Colonic mucosa (tissue), 4 donors: ENCODE measurements at regions of chr13 and their contacts with region 1.

Region 1: DNA sequence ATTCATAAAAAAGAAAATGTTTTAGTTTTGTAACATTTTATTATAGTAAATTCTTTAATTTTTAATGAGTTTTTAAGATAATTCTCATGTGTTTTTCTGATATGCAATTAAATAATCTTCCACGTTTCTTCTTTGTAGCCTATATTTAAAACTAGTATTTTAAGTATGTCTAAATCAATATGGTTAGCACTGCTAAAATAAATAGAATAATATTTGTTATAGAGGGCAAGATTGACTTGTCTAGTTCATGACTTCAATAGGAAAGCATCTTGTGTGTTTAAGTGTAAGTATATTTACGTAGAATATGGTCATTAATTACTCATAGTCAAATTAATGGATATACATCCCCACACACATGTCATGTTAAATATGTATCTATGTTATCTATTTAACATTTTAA is 121.8 kb upstream of the SLITRK1 start:
- DNase-seq: no peak
- H3K4me3 ChIP-seq: no peak overlapping the region
- H3K27ac ChIP-seq: no peak overlapping the region
- H3K4me1 ChIP-seq: no peaks in the 10 kb centered on the region
- H3K27me3 ChIP-seq: no peaks in the 10 kb centered on the region
- CTCF ChIP-seq: no peak

Region 2: GRCh38 chr13:83987394-83987793 is 16.7 kb before region 1 on chr13:
- intact Hi-C with region 1: loop called (anchors 2 kb)
- DNase-seq: no peak
- H3K4me3 ChIP-seq: no peak overlapping the region
- H3K27ac ChIP-seq: no peak overlapping the region
- H3K4me1 ChIP-seq: no peaks in the 10 kb centered on the region
- H3K27me3 ChIP-seq: no peaks in the 10 kb centered on the region
- CTCF ChIP-seq: no peak